Spleen (tissue), 13 donors: ENCODE measurements at regions of chr9 and their contacts with region 1.

Region 1: GRCh38 chr9:122092611-122093506 is at the start of gene TTLL11:
- DNase-seq: peak; percentile 99
- H3K4me3 ChIP-seq: peak within 1 kb of the TSS; percentile 64 to 100 (median 92)
- H3K27ac ChIP-seq: peak within 1 kb of the TSS; percentile 39 to 85 (median 80)
- H3K4me1 ChIP-seq: peaks cover 15 to 70% (median 41%) of the 10 kb centered on the region in 6 donors
- H3K27me3 ChIP-seq: peaks cover 0 to 10% (median 0%) of the 10 kb centered on the region in 7 donors
- CTCF ChIP-seq: peak in 2 of 11 experiments; percentile 7 to 21
- POLR2A ChIP-seq: no peak
- total RNA-seq, gene TTLL11: 6.9 to 12.8 (median 9.5) TPM

Region 2: GRCh38 chr9:122286764-122287163 is 193.9 kb after region 1 on chr9:
- intact Hi-C with region 1: no loop called
- DNase-seq: no peak
- H3K4me3 ChIP-seq: no peak overlapping the region
- H3K27ac ChIP-seq: peak overlapping the region in 3 of 8 donors; percentile 0 to 62 (median 11)
- H3K4me1 ChIP-seq: peaks cover 8 to 26% (median 17%) of the 10 kb centered on the region in 6 donors
- H3K27me3 ChIP-seq: no peaks in the 10 kb centered on the region
- CTCF ChIP-seq: no peak
- POLR2A ChIP-seq: no peak

Region 3: DNA sequence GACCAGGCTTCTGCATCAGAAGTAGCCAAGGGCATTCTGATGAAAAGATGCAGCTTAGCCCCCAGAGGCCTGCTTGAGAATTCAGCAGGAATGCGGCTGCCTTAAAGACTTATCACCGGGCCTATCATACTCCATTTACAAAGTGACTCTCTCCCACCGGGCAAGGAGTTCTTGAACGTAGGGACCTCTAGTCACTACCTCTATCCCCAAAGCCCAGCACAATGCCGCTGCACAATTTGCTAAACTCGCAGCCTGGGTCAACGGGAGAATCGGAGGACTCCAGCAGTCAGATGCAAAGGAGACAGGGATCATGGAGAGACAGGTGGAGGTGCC is 734.9 kb after region 1 on chr9:
- intact Hi-C with region 1: loop called (anchors 10 kb)
- DNase-seq: no peak
- H3K4me3 ChIP-seq: peak overlapping the region; percentile 72 to 97 (median 92)
- H3K27ac ChIP-seq: peak overlapping the region; percentile 94 to 98 (median 96)
- H3K4me1 ChIP-seq: peaks cover 22 to 50% (median 43%) of the 10 kb centered on the region in 6 donors
- H3K27me3 ChIP-seq: no peaks in the 10 kb centered on the region
- CTCF ChIP-seq: no peak
- POLR2A ChIP-seq: no peak

Region 4: DNA sequence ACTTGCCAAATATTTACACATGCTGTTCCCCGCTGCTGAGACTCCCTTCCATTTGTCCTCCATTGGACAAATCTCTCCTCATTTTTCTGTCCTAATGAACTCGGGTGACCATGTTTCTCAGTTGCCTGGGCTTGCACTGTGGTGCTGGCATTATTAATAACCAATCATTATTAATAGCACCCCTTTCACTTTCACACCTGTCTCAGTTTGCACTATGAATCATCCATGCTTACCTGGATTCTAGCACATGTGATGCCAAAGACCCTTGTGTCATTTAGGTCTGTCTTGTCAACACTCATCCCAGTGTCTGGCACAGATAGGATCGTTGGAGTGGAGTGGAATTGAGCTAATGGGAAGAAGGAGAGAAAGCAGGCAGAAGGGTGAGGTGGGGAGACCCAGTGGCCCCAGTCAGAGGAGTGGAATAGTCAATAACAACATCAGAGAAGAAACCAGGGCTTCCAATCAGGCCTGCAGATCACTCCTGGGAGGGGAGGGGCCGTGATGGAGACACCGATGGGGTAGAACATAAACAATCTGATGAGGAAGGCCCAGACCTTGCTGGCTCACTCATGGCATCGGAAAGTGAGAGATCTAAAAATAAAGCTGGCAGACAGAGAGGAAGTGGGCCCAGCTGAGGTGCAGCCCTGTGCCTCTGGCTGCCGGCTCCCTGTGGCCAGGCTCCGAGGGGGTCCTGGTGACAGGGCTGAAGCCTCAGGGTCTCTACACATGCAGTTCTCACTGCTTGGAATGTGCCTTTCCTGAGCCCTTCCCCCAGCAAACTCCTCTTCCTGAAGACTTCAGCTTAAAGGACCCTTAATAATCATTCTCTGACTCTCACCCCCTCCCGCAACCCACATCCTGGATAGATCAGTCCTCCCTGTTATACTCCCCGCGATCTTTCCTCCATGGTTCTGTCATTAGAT is 1229.7 kb after region 1 on chr9:
- intact Hi-C with region 1: no loop called
- DNase-seq: peak; percentile 86
- H3K4me3 ChIP-seq: peak overlapping the region in 1 of 8 donors; percentile 40
- H3K27ac ChIP-seq: peak overlapping the region; percentile 32 to 76 (median 56)
- H3K4me1 ChIP-seq: peaks cover 0 to 73% (median 44%) of the 10 kb centered on the region in 6 donors
- H3K27me3 ChIP-seq: no peaks in the 10 kb centered on the region
- CTCF ChIP-seq: no peak
- POLR2A ChIP-seq: no peak